ENCODE measurements at regions of chr3 and their contacts with region 1.

Region 1: DNA sequence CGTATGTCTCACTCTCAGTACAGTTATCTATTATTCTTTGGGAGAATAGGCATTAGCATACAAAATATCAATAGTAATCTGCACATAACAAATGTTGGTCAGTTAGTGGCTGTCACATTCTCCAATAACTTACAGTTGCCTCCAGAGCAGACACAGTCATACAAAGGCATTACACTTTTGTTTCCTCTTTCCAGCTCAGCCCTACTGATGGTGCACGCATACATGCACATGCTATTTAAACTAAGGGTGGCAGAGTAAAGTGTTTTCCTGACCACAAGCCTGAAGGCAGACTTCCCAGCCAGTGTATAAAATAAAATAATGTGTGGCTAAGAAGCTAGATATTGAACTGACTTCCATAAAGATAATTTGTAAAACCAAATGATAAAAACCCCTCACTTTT is 47.6 kb downstream of the PHLDB2 start:
- DNase-seq: no peak
- H3K4me3 ChIP-seq: no peak overlapping the region
- H3K27ac ChIP-seq: no peak overlapping the region
- H3K4me1 ChIP-seq: peaks cover 0 to 4% of the 10 kb centered on the region in 2 donors
- H3K27me3 ChIP-seq: no peaks in the 10 kb centered on the region
- CTCF ChIP-seq: no peak
- POLR2A ChIP-seq: no peak

Region 2: GRCh38 chr3:111971533-111972130 is 65.0 kb after region 1 on chr3:
- intact Hi-C with region 1: loop called (anchors 2 kb)
- DNase-seq: no peak
- H3K4me3 ChIP-seq: no peak overlapping the region
- H3K27ac ChIP-seq: no peak overlapping the region
- H3K4me1 ChIP-seq: no peaks in the 10 kb centered on the region
- H3K27me3 ChIP-seq: no peaks in the 10 kb centered on the region
- CTCF ChIP-seq: no peak
- POLR2A ChIP-seq: no peak